Transverse colon (tissue), 4 donors: ENCODE measurements at regions of chr10 and their contacts with region 1.

Region 1: GRCh38 chr10:126964190-126964589 is 59.0 kb downstream of the DOCK1 start:
- DNase-seq: no peak
- H3K4me3 ChIP-seq: no peak overlapping the region
- H3K27ac ChIP-seq: no peak overlapping the region
- H3K4me1 ChIP-seq: no peaks in the 10 kb centered on the region
- H3K27me3 ChIP-seq: no peaks in the 10 kb centered on the region
- CTCF ChIP-seq: no peak
- EP300 ChIP-seq: no peak
- POLR2A ChIP-seq: no peak

Region 2: GRCh38 chr10:128489324-128490247 is 1525.4 kb after region 1 on chr10:
- in situ Hi-C with region 1: no loop called
- intact Hi-C with region 1: loop called (anchors 5 kb)
- DNase-seq: no peak
- H3K4me3 ChIP-seq: no peak overlapping the region
- H3K27ac ChIP-seq: no peak overlapping the region
- H3K4me1 ChIP-seq: no peaks in the 10 kb centered on the region
- H3K27me3 ChIP-seq: no peaks in the 10 kb centered on the region
- CTCF ChIP-seq: no peak
- EP300 ChIP-seq: no peak
- POLR2A ChIP-seq: no peak